ENCODE measurements at regions of chr1 and their contacts with region 1.

Region 1: GRCh38 chr1:48439380-48439779 is 32.6 kb downstream of the SPATA6 start:
- DNase-seq: no peak
- ATAC-seq: no peak
- H3K4me3 ChIP-seq: no peak overlapping the region
- H3K27ac ChIP-seq: no peak overlapping the region
- H3K4me1 ChIP-seq: no peaks in the 10 kb centered on the region
- H3K27me3 ChIP-seq: no peaks in the 10 kb centered on the region
- CTCF ChIP-seq: no peak

Region 2: GRCh38 chr1:48396208-48396607 is 43.2 kb before region 1 on chr1:
- intact Hi-C with region 1: no loop called
- DNase-seq: no peak
- ATAC-seq: no peak
- H3K4me3 ChIP-seq: no peak overlapping the region
- H3K27ac ChIP-seq: no peak overlapping the region
- H3K4me1 ChIP-seq: no peaks in the 10 kb centered on the region
- H3K27me3 ChIP-seq: no peaks in the 10 kb centered on the region
- CTCF ChIP-seq: no peak

Region 3: GRCh38 chr1:48450505-48450904 is 11.1 kb after region 1 on chr1:
- intact Hi-C with region 1: loop called in 1 of 10 experiments (anchors 2 kb)
- DNase-seq: no peak
- ATAC-seq: no peak
- H3K4me3 ChIP-seq: no peak overlapping the region
- H3K27ac ChIP-seq: no peak overlapping the region
- H3K4me1 ChIP-seq: no peaks in the 10 kb centered on the region
- H3K27me3 ChIP-seq: no peaks in the 10 kb centered on the region
- CTCF ChIP-seq: peak in 3 of 9 donors; percentile 22 to 46 (median 38)